Heart right ventricle (tissue), 16 donors: ENCODE measurements at regions of chr11 and their contacts with region 1.

Region 1: GRCh38 chr11:65919146-65920033 is at the start of gene DRAP1:
- DNase-seq: peak; percentile 98 to 100
- ATAC-seq: peak; percentile 91 to 98 (median 95)
- H3K4me3 ChIP-seq: peak within 1 kb of the TSS; percentile 81 to 100 (median 98)
- H3K27ac ChIP-seq: peak within 1 kb of the TSS; percentile 95 to 99 (median 97)
- H3K4me1 ChIP-seq: peaks cover 36 to 60% (median 53%) of the 10 kb centered on the region in 9 donors
- H3K27me3 ChIP-seq: no peaks in the 10 kb centered on the region
- CTCF ChIP-seq: peak in 1 of 9 donors; percentile 19
- total RNA-seq, gene DRAP1: 69.4 to 115 (median 93.8) TPM

Region 2: GRCh38 chr11:65569973-65570918 is 349.1 kb before region 1 on chr11 and contains the start of gene ZNRD2:
- intact Hi-C with region 1: loop called in 1 of 10 experiments (anchors 5 kb)
- DNase-seq: peak; percentile 97 to 98
- ATAC-seq: peak; percentile 85 to 92 (median 90)
- H3K4me3 ChIP-seq: peak within 1 kb of the TSS; percentile 54 to 98 (median 86)
- H3K27ac ChIP-seq: peak within 1 kb of the TSS; percentile 73 to 98 (median 94)
- H3K4me1 ChIP-seq: peaks cover 24 to 76% (median 59%) of the 10 kb centered on the region in 9 donors
- H3K27me3 ChIP-seq: no peaks in the 10 kb centered on the region
- CTCF ChIP-seq: peak in 8 of 9 donors; percentile 39 to 73 (median 62)
- total RNA-seq, gene ZNRD2: 23.7 to 44.0 (median 26.3) TPM

Region 3: GRCh38 chr11:65873318-65874156 is 45.9 kb before region 1 on chr11:
- intact Hi-C with region 1: loop called in 1 of 10 experiments (anchors 1 kb)
- DNase-seq: peak; percentile 95 to 96
- ATAC-seq: peak; percentile 91 to 97 (median 94)
- H3K4me3 ChIP-seq: peak overlapping the region; percentile 47 to 73 (median 68)
- H3K27ac ChIP-seq: peak overlapping the region; percentile 84 to 97 (median 96)
- H3K4me1 ChIP-seq: peaks cover 16 to 40% (median 29%) of the 10 kb centered on the region in 9 donors
- H3K27me3 ChIP-seq: no peaks in the 10 kb centered on the region
- CTCF ChIP-seq: no peak

Region 4: GRCh38 chr11:65897020-65897471 is 22.3 kb before region 1 on chr11:
- intact Hi-C with region 1: no loop called
- DNase-seq: no peak
- ATAC-seq: no peak
- H3K4me3 ChIP-seq: no peak overlapping the region
- H3K27ac ChIP-seq: no peak overlapping the region
- H3K4me1 ChIP-seq: peaks cover 15 to 55% (median 44%) of the 10 kb centered on the region in 9 donors
- H3K27me3 ChIP-seq: peaks cover 0 to 9% (median 4%) of the 10 kb centered on the region in 7 donors
- CTCF ChIP-seq: no peak

Region 5: GRCh38 chr11:65961232-65961901 is 42.0 kb after region 1 on chr11 and contains the start of gene SART1:
- intact Hi-C with region 1: loop called in 6 of 10 experiments (anchors 1 to 5 kb)
- DNase-seq: peak; percentile 97 to 99
- ATAC-seq: peak; percentile 97 to 99 (median 99)
- H3K4me3 ChIP-seq: peak within 1 kb of the TSS; percentile 80 to 100 (median 92)
- H3K27ac ChIP-seq: peak within 1 kb of the TSS; percentile 74 to 98 (median 92)
- H3K4me1 ChIP-seq: peaks cover 6 to 34% (median 27%) of the 10 kb centered on the region in 9 donors
- H3K27me3 ChIP-seq: no peaks in the 10 kb centered on the region
- CTCF ChIP-seq: peak in 1 of 9 donors; percentile 10
- total RNA-seq, gene SART1: 26.2 to 40.1 (median 32.5) TPM